ENCODE measurements at regions of chr2 and their contacts with region 1.

Region 1: DNA sequence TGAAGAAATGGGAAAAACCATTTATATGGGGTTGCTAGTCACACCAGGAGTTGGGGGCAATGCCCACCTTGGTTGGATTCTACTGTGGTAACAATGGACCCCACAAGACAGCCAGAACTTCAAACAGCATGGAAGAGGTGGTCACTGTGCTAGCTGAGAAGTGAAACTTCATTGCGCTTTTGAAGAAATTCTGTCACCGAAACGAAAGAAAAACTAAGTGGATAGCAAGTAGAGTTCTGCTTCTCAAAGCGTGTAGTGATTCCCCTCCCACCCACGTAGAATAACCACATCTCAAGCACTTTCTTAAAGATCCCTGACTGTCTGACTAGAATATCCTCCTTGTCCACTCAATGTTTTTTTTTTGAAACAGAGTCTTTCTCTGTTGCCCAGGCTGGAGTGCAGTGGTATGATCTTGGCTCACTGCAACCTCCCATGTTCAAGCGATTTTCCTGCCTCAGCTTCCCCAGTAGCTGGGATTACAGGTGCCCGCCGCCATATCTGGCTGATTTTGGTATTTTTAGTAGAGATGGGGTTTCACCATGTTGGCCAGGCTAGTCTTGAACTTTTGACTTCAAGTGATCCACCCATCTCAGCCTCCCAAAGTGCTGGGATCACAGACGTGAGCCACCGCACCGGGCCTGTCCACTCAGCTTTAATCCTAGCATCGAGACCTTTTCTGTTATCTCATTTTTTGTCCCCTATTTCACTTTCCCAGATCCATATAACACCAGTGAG is 30.1 kb upstream of the CCL20 start:
- DNase-seq: peak; percentile 67
- H3K4me3 Mint-ChIP-seq: peak overlapping the region; percentile 65
- H3K27ac Mint-ChIP-seq: peak overlapping the region; percentile 56
- H3K4me1 Mint-ChIP-seq: peaks cover 11% of the 10 kb centered on the region
- H3K27me3 Mint-ChIP-seq: peaks cover 18% of the 10 kb centered on the region

Region 2: DNA sequence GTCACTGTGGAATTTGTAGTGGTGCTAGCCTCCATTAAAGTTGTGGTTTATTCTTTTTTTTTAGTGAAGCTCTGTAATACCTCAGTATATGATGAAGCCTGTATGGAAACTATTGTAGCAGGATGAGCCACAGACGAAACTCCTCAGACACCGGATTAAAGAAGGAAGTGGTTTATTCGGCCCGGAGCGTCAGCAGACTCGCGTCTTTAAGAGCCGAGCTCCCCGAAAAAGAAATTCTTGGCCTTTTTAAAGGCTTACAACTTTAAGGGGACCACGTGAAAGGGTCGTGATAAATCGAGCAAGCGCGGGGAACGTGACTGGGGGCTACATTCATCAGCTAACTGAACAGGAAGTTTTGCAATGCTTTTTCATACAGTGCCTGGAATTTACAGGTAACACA is 22.0 kb after region 1 on chr2:
- intact Hi-C with region 1: loop called (anchors 2 kb)
- DNase-seq: peak; percentile 68
- H3K4me3 Mint-ChIP-seq: peak overlapping the region; percentile 76
- H3K27ac Mint-ChIP-seq: peak overlapping the region; percentile 79
- H3K4me1 Mint-ChIP-seq: peaks cover 8% of the 10 kb centered on the region
- H3K27me3 Mint-ChIP-seq: peaks cover 1% of the 10 kb centered on the region

Region 3: GRCh38 chr2:227817850-227818674 is 34.5 kb after region 1 on chr2:
- intact Hi-C with region 1: loop called (anchors 1 kb)
- DNase-seq: peak; percentile 73
- H3K4me3 Mint-ChIP-seq: peak overlapping the region; percentile 27
- H3K27ac Mint-ChIP-seq: peak overlapping the region; percentile 89
- H3K4me1 Mint-ChIP-seq: peaks cover 19% of the 10 kb centered on the region
- H3K27me3 Mint-ChIP-seq: peaks cover 2% of the 10 kb centered on the region

Region 4: DNA sequence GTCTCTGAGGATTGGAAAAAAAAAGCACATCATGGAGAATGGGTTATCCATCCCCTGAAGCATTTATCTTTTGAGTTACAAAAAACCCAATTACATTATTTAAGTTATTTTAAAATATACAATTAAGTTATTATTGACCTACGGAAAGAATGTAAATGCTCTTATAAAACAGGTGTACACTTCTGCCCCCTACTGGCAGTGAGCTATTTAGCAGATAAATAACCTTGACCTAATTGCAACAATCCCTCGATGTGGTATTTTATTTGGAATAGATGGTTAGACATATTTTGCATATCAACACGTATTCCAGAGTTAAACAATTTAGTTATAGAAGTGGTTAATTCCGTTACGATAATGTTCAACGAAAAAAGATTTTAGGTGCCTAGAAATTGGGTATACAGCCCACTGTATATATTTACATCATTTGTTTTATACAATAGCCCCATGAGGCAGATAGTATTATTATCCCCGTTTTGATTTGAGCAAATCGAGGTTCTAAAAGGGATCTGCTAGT is 78.7 kb after region 1 on chr2:
- intact Hi-C with region 1: loop called (anchors 5 kb)
- DNase-seq: peak; percentile 69
- H3K4me3 Mint-ChIP-seq: no peak overlapping the region
- H3K27ac Mint-ChIP-seq: no peak overlapping the region
- H3K4me1 Mint-ChIP-seq: no peaks in the 10 kb centered on the region
- H3K27me3 Mint-ChIP-seq: no peaks in the 10 kb centered on the region